ENCODE measurements at regions of chr3 and their contacts with region 1.

Region 1: GRCh38 chr3:75171630-75172230 is 492.4 kb upstream of the FRG2C start:
- DNase-seq: no peak
- ATAC-seq: no peak

Region 2: DNA sequence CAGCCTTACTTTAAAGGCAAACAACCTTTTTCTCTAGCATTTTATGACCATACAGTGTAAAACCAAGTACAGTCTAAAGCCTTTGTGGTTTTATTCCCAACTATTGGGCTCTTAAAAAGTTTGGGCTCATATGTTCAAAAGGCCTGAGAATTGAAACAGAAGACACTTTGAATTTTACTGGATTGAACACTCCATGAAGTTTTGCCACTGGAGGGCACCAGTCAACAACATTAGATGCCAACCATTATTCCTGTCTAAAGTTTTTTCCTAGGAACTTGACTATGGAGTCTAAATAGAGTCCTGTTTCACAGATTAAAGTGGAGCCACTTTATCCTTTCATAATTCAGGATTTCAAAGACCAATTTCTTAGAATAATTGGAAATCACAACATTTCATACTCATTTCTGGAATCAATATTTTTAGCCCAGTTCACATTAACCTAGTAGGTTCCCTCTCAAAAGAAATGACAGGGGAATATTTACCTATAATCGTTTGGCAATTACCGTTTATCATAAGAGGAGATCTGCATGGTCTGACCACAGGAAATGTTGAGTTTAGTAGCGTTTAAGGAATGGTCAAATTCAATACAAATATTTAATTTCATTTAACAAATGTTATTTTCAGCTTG is 1302.9 kb before region 1 on chr3:
- intact Hi-C with region 1: loop called in 1 of 2 experiments (anchors 2 kb)
- DNase-seq: no peak
- ATAC-seq: peak in 1 of 2 donors; percentile 47

Region 3: DNA sequence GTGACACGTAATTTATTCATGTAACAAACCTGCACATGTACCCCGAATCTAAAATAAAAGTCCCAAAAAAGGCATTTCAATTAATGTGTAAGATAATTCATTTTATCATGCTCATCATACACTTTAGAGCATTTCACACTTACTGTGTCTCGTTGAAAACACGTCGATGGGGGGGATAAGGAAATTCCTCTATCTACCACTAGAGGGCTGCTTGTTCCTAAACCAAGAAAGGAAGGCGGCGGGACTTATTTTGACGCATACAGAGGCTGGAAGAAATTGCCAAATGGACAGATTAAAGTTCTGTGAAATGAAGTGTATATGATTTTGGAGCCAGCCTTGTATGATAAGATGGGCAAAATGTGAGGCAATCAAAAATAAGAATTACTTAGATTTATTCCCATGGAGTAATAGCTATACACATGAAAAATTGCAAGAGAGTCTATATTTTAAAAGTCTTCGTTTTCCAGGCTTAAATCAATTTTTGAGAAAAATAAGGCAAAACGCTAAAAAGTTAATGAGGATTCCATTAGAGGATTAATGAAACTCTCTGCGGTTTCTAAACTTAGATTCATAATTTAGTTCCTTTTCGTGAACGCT is 904.0 kb before region 1 on chr3:
- intact Hi-C with region 1: loop called in 1 of 2 experiments (anchors 10 kb)
- DNase-seq: peak; percentile 28
- ATAC-seq: peak in 1 of 2 donors; percentile 36

Measured in left cardiac atrium (tissue), 4 donors.